Activated CD8-positive, alpha-beta T cell treated with anti-CD3 and anti-CD28 coated beads, Interleukin-2, amount 10 ng/mL, durations not matched to agents 7 days and 5 days (primary cell): ENCODE measurements at regions of chr3 and their contacts with region 1.

Region 1: GRCh38 chr3:16482770-16483531 is 30.5 kb downstream of the RFTN1 start:
- DNase-seq: peak; percentile 71
- ATAC-seq: peak; percentile 89
- H3K4me3 Mint-ChIP-seq: peak overlapping the region; percentile 40
- H3K27ac Mint-ChIP-seq: peak overlapping the region; percentile 83
- H3K4me1 Mint-ChIP-seq: peaks cover 73% of the 10 kb centered on the region
- H3K27me3 Mint-ChIP-seq: no peaks in the 10 kb centered on the region

Region 2: DNA sequence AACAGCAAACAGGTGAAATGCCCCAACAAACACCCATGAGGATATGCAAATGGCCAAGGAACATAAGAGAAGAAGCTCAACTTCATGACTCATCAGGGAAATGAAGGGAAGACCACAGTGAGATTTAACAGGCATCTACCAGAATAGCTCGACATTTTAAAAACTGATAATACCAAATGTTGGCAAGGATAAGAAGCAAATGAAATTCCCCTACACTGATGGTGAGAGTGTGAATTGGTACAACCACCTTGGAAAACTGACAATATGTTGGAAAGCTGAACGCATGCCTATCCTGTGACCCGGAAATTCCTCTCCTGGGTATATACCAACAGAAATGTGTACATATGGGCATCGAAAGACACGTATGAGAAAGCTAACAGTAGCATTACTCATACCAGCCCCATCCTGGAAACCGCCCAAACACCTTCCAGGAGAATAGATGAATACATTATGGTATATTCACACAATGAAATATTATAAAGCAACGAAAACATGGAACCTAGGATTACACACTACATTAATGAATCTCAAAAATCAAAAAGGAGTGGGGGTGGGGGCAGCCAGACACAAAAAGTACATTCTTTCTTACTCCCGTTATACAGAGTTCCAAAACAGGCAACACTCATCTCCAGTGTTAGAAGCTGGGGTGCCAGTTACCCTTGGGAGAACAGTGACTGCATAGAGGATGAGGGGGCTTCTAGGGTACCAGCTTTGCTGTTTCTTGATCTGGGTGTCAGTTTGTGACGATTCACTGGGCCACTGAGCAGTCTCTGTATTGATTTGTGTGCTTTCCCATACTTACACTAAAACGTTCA is 13.7 kb after region 1 on chr3:
- CTCF ChIA-PET with region 1: interaction called, 17 read pairs
- POLR2A ChIA-PET with region 1: interaction called, 4 read pairs
- DNase-seq: no peak
- ATAC-seq: peak; percentile 47
- H3K4me3 Mint-ChIP-seq: no peak overlapping the region
- H3K27ac Mint-ChIP-seq: peak overlapping the region; percentile 53
- H3K4me1 Mint-ChIP-seq: peaks cover 65% of the 10 kb centered on the region
- H3K27me3 Mint-ChIP-seq: no peaks in the 10 kb centered on the region